ENCODE measurements at regions of chr3 and their contacts with region 1.

Region 1: DNA sequence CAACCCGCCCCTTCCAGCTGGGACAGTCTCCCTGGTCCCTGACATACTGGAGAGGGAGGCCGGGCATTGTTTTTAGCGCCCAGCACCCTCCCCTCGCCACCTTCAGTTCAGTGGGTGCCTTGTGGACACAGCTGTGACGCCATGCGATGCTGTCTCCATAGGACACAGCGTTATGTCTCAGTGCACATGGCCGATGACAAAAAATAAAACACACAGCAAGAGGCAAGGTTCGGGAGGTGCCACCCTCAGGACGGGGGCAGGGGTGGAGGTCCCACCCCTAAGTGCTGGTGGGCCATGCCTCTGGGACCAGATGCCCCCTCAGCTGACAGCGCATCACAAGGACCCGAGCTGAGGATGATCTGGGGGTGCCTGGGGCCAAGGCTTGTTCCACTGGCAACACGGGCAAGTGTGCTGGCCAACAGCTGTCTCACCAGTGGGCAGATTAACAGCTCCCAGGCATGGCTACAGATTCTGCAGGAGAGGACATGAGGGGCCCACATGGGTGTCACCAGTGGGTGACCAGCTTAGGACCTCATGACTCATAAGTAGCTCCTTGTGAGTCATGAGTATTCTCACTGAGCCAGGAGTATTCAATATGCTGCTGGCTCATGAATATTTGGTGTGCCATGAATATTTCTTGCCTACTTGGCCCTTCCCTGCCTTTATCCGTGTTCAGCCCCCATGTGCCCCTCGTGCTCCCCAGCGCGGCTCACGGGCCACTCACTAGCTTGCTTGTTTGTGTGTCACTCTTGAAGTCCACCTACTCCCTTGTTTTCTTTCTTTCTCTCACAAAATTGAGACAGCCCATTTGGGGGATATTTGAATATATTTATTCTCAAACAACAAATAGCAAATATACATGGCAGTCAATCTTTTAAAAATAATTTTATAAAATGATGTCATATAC is 81.9 kb downstream of the PLXNA1 start:
- DNase-seq: no peak
- H3K4me3 Mint-ChIP-seq: no peak overlapping the region
- H3K27ac Mint-ChIP-seq: no peak overlapping the region
- H3K4me1 Mint-ChIP-seq: peaks cover 9% of the 10 kb centered on the region
- H3K27me3 Mint-ChIP-seq: peaks cover 53% of the 10 kb centered on the region
- CTCF ChIP-seq: no peak

Region 2: GRCh38 chr3:126671521-126671920 is 393.3 kb before region 1 on chr3:
- CTCF ChIA-PET with region 1: no interaction called
- intact Hi-C with region 1: no loop called
- DNase-seq: no peak
- H3K4me3 Mint-ChIP-seq: no peak overlapping the region
- H3K27ac Mint-ChIP-seq: no peak overlapping the region
- H3K4me1 Mint-ChIP-seq: no peaks in the 10 kb centered on the region
- H3K27me3 Mint-ChIP-seq: peaks cover 36% of the 10 kb centered on the region
- CTCF ChIP-seq: no peak

Region 3: GRCh38 chr3:126731044-126731443 is 333.7 kb before region 1 on chr3:
- CTCF ChIA-PET with region 1: interaction called, 17 read pairs
- intact Hi-C with region 1: no loop called
- DNase-seq: no peak
- H3K4me3 Mint-ChIP-seq: no peak overlapping the region
- H3K27ac Mint-ChIP-seq: no peak overlapping the region
- H3K4me1 Mint-ChIP-seq: no peaks in the 10 kb centered on the region
- H3K27me3 Mint-ChIP-seq: no peaks in the 10 kb centered on the region
- CTCF ChIP-seq: no peak